Psoas muscle (tissue), 8 donors: ENCODE measurements at regions of chr6 and their contacts with region 1.

Region 1: DNA sequence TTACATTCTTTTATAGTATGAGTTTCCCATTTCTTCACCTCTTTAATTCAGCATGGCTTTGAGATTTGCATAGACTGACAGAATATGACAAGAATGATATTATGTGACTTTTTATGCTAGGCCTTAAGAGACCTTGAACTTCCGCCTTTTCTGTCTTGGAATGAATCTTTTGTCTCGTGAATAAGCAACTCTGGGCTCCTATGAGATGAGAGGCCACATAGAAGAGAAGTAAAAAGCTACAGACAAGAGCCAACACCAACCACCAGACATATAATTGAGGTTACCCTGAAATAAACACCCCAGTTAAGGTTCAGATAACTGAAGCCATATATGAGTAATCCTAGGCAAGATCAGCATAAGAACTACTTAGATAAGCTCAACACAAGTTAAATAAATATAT is 600.8 kb downstream of the MEI4 start:
- DNase-seq: no peak
- ATAC-seq: no peak
- H3K4me3 ChIP-seq: no peak overlapping the region
- H3K27ac ChIP-seq: no peak overlapping the region
- H3K4me1 ChIP-seq: no peaks in the 10 kb centered on the region
- H3K27me3 ChIP-seq: no peaks in the 10 kb centered on the region
- CTCF ChIP-seq: no peak

Region 2: GRCh38 chr6:77844822-77845221 is 408.8 kb before region 1 on chr6:
- intact Hi-C with region 1: loop called in 1 of 2 experiments (anchors 5 kb)
- DNase-seq: no peak
- ATAC-seq: no peak
- H3K4me3 ChIP-seq: no peak overlapping the region
- H3K27ac ChIP-seq: no peak overlapping the region
- H3K4me1 ChIP-seq: no peaks in the 10 kb centered on the region
- H3K27me3 ChIP-seq: no peaks in the 10 kb centered on the region
- CTCF ChIP-seq: no peak

Region 3: GRCh38 chr6:78324213-78324612 is 70.6 kb after region 1 on chr6:
- intact Hi-C with region 1: loop called in 1 of 2 experiments (anchors 5 kb)
- DNase-seq: no peak
- ATAC-seq: no peak
- H3K4me3 ChIP-seq: no peak overlapping the region
- H3K27ac ChIP-seq: no peak overlapping the region
- H3K4me1 ChIP-seq: no peaks in the 10 kb centered on the region
- H3K27me3 ChIP-seq: no peaks in the 10 kb centered on the region
- CTCF ChIP-seq: no peak

Region 4: GRCh38 chr6:78379982-78380381 is 126.4 kb after region 1 on chr6:
- intact Hi-C with region 1: no loop called
- DNase-seq: no peak
- ATAC-seq: no peak
- H3K4me3 ChIP-seq: no peak overlapping the region
- H3K27ac ChIP-seq: no peak overlapping the region
- H3K4me1 ChIP-seq: no peaks in the 10 kb centered on the region
- H3K27me3 ChIP-seq: no peaks in the 10 kb centered on the region
- CTCF ChIP-seq: no peak